ENCODE measurements at regions of chr1 and their contacts with region 1.

Region 1: GRCh38 chr1:180533266-180533987 is 25.3 kb upstream of the OVAAL start:
- DNase-seq: peak; percentile 19 to 89
- H3K4me3 ChIP-seq: no peak overlapping the region
- CTCF ChIP-seq: no peak
- POLR2A ChIP-seq: no peak

Region 2: GRCh38 chr1:180560868-180561600 is 27.6 kb after region 1 on chr1:
- intact Hi-C with region 1: no loop called
- DNase-seq: no peak
- H3K4me3 ChIP-seq: no peak overlapping the region
- CTCF ChIP-seq: no peak
- POLR2A ChIP-seq: no peak

Region 3: GRCh38 chr1:180674603-180675530 is 141.4 kb after region 1 on chr1:
- intact Hi-C with region 1: no loop called
- DNase-seq: no peak
- H3K4me3 ChIP-seq: no peak overlapping the region
- CTCF ChIP-seq: no peak
- POLR2A ChIP-seq: no peak

Region 4: DNA sequence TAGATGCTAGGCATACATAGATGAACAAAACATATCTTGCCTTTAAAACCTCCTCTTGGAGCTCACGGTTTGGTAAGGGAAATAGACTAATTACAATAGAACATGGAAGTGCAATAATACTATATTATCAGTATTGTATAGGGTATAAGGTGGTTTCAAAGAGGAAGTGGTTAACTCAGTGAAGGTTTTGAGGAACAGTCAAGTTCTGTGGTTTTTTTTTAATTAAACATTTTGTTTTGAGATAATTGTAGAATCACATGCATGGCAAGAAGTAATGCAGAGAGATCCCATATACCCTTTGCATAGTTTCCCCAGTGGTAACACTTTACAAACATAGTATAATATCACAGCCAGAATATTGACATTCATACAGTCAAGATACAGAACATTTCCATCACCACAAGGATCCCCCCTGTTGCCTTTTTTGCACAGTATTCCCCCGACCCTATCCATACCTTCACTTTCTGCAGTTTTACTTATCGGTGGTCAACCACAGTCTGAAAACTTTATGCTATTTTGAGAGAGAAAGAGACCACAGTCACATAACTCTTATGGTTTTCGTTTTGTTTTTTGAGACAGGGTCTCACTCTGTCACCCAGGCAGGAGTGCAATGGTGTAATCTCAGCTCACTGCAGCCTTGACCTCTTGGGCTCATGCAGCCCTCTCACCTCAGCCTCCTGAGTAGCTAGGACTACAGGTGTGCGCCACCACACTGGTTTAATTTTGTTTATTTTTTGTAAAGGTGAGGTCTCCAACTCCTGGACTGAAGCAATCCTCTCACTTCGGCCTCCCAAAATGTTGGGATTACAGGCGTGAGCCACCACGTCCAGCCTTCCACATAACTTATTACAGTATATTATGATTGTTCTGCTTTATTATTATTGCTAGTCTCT is 318.8 kb after region 1 on chr1:
- intact Hi-C with region 1: loop called (anchors 10 kb)
- DNase-seq: no peak
- H3K4me3 ChIP-seq: no peak overlapping the region
- CTCF ChIP-seq: no peak
- POLR2A ChIP-seq: no peak

Region 5: DNA sequence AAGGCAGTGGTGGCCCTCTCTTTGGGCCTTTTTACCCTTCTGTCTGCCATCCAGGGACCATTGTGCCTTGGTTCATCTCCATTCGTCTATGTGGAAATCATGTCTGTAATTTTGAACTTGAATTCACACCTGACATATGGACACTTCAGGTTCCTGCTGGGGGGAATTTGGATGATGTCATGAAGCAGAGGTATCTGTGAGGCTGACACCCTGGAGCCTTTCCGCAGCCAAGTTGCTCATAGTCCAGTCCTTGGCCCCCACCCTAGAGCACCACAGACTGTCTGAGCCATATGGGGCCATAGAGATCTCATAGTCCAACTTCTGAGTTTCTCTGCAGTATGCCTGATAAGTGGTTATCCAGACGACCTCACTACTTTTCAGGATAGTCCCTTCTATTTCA is 802.2 kb after region 1 on chr1:
- intact Hi-C with region 1: no loop called
- DNase-seq: peak in 1 of 2 donors; percentile 7
- H3K4me3 ChIP-seq: no peak overlapping the region
- CTCF ChIP-seq: no peak
- POLR2A ChIP-seq: no peak

Measured in lower leg skin (tissue), 4 donors.